ENCODE measurements at regions of chr11 and their contacts with region 1.

Region 1: GRCh38 chr11:64341851-64342791 is 2.1 kb downstream of the CCDC88B start:
- DNase-seq: peak; percentile 76 to 88 (median 85)
- ATAC-seq: peak; percentile 51 to 54
- H3K4me3 Mint-ChIP-seq: peak overlapping the region in 9 of 10 donors; percentile 32 to 92 (median 85)
- H3K27ac Mint-ChIP-seq: peak overlapping the region in 5 of 10 donors; percentile 29 to 75 (median 52)
- H3K4me1 Mint-ChIP-seq: peaks cover 23 to 60% (median 50%) of the 10 kb centered on the region in 4 donors
- H3K27me3 Mint-ChIP-seq: no peaks in the 10 kb centered on the region

Region 2: DNA sequence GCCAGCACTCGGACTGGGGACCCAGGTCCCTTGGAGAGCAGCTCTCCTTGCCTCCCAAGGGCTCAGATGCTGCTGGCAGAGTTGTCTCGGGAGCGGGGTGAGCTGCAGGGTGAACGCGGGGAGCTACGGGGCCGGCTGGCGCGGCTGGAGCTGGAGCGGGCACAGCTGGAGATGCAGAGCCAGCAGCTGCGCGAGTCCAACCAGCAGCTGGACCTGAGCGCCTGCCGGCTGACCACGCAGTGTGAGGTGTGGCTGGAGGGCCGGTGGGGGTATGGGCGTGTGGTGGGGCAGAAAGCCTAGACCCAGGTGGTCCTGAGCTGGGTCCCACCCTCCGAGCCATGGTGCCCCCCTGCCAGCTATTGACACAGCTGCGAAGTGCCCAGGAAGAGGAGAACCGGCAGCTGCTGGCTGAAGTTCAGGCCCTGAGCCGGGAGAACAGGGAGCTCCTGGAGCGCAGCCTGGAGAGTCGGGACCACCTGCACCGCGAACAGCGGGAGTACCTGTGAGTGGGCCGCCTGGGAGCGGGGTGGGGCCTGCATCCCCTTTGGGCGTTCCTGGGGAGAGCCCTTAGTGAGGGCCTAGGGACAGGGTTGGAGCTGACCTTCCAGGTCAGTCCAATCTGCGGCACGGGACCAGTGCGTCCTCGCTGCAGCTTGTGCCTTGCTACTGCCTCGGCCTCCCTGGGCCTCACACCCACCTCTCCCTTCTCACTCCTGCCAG is 11.0 kb after region 1 on chr11:
- POLR2A ChIA-PET with region 1: interaction called, 27 read pairs
- DNase-seq: no peak
- ATAC-seq: no peak
- H3K4me3 Mint-ChIP-seq: no peak overlapping the region
- H3K27ac Mint-ChIP-seq: no peak overlapping the region
- H3K4me1 Mint-ChIP-seq: peaks cover 2 to 21% (median 14%) of the 10 kb centered on the region in 4 donors
- H3K27me3 Mint-ChIP-seq: no peaks in the 10 kb centered on the region

Region 3: DNA sequence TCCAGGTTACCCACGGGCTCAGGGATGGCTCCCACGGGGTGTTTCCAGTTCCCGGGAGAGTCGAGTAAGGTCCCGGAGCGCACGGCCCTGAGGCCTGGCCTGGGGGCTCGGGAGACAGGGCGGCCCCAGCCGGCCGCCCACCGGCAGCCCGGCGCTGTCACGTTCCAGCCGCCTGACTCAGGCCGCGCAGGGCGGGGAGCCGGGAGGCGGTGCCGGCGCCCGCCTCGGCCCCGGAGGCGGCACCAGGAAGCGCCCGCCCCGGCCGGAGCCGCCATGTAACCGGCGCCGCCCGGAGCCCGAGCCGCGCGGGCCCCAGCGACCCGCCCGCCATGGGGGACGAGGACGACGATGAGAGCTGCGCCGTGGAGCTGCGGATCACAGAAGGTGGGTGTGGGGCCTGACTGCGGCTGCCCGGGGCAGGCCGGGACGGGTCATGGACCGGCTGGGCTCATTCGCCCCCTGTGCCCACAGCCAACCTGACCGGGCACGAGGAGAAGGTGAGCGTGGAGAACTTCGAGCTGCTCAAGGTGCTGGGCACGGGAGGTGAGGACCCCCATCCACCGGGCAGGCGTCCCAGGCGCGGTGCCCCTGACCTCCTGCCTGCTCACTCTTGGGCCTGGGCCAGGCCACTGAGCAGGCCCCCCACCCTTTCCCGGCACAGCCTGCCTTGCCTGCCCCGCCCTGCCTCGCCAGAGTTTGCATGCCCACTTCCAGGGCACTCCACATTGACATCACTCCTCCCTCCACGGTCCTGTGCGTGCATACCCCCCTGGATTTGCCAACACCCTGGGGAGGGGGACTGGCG is 17.0 kb after region 1 on chr11 and contains the start of gene RPS6KA4:
- POLR2A ChIA-PET with region 1: interaction called, 27 read pairs
- DNase-seq: peak in 5 of 10 donors; percentile 35 to 42 (median 38)
- ATAC-seq: peak; percentile 68 to 83
- H3K4me3 Mint-ChIP-seq: peak within 1 kb of the TSS; percentile 86 to 95 (median 92)
- H3K27ac Mint-ChIP-seq: peak within 1 kb of the TSS; percentile 41 to 89 (median 80)
- H3K4me1 Mint-ChIP-seq: peaks cover 11 to 39% (median 32%) of the 10 kb centered on the region in 4 donors
- H3K27me3 Mint-ChIP-seq: no peaks in the 10 kb centered on the region
- polyA plus RNA-seq, gene RPS6KA4: 4.3 to 5.1 (median 5.1) TPM

Measured in naive thymus-derived CD8-positive, alpha-beta T cell (primary cell).